K562 (cell line): ENCODE measurements at regions of chr12 and their contacts with region 1.

Region 1: GRCh38 chr12:92928962-92929915 is at the start of gene EEA1:
- DNase-seq: peak; percentile 97 to 99 (median 99)
- ATAC-seq: peak; percentile 96
- H3K4me3 ChIP-seq: peak within 1 kb of the TSS; percentile 74
- H3K27ac ChIP-seq: peak within 1 kb of the TSS; percentile 96
- H3K4me1 ChIP-seq: peaks cover 8 to 15% of the 10 kb centered on the region in 2 experiments; a peak in 3 of 5 replicates
- H3K27me3 ChIP-seq: no peaks in the 10 kb centered on the region
- CTCF ChIP-seq: peak in 2 of 3 experiments; percentile 52 to 75; a peak in 4 of 6 replicates
- EP300 ChIP-seq: no peak
- POLR2A ChIP-seq: peak; percentile 92
- RAD21 ChIP-seq: peak; percentile 20 to 30; a peak in 3 of 4 replicates
- polyA plus RNA-seq, gene EEA1: 3.5 to 4.8 TPM

Region 2: DNA sequence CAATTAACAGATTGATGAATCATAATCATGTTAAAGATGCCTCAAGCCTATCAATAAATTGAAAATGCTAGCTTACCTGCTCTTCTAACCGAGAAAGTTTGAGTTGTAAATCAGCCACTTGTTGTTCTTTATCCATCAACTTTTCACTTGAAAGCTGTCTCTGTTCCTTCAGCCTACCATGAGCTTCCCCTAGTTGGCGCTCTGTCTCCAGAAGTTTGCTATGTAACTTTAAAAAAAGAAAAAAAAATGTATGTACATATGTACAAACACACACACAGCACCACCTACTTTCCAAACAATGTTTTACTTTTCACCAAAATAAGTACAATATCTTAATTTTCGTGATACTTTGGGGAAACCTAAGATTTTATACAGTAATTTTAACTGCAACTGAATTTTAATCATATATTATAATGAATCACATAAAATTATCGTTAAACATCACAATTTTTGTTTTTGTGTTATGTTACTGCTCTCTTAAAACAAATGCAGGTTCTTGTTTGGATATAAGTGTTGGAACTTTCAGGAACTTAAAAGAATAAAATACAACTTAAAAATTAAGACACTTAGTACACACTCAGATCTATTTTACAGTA is 101.3 kb before region 1 on chr12:
- CTCF ChIA-PET with region 1: no interaction called
- POLR2A ChIA-PET with region 1: no interaction called
- in situ Hi-C with region 1: loop called (anchors 10 kb)
- intact Hi-C with region 1: loop called (anchors 5 kb)
- DNase-seq: peak; percentile 15 to 61 (median 29)
- ATAC-seq: peak; percentile 82
- H3K4me3 ChIP-seq: no peak overlapping the region
- H3K27ac ChIP-seq: no peak overlapping the region
- H3K4me1 ChIP-seq: no peaks in the 10 kb centered on the region; a peak in 1 of 5 replicates
- H3K27me3 ChIP-seq: no peaks in the 10 kb centered on the region
- CTCF ChIP-seq: peak; percentile 69 to 84 (median 76)
- EP300 ChIP-seq: 0 out of 2 replicates have a peak, but pooled peaks have one; percentile 14
- POLR2A ChIP-seq: no peak
- RAD21 ChIP-seq: peak; percentile 60 to 74

Region 3: DNA sequence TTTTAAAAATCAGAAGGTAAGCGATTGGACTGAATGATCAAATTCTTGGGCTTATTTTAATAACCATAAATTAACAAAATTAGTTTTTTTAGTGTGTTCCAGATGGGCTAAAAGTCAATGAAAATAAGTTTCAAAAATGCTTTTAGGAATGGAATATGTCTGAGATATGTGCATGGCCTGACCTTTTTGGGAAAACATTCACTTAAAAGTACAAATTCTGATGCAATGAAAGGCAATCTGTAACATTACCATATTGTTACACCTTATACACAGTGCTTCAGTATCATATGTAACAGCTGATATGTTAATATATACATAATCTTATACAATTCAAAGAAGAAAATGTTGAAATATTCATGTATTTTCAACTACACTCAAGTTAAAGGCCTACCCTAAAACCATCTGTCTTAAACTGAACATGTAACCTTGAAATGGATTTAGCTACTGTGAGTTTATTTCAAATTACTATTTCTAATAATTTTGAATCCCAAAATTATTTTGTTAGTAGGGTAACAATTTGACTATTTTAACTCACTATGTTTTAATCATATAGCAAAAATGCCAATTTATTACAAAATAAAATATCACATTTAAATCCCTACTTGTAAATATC is 85.0 kb before region 1 on chr12:
- CTCF ChIA-PET with region 1: no interaction called
- POLR2A ChIA-PET with region 1: no interaction called
- in situ Hi-C with region 1: no loop called
- intact Hi-C with region 1: loop called (anchors 5 kb)
- DNase-seq: no peak
- ATAC-seq: peak; percentile 78
- H3K4me3 ChIP-seq: no peak overlapping the region
- H3K27ac ChIP-seq: no peak overlapping the region
- H3K4me1 ChIP-seq: no peaks in the 10 kb centered on the region
- H3K27me3 ChIP-seq: no peaks in the 10 kb centered on the region
- CTCF ChIP-seq: no peak
- EP300 ChIP-seq: peak; percentile 56; the same call in 1 of the 2 replicates
- POLR2A ChIP-seq: no peak
- RAD21 ChIP-seq: no peak